GM23248 (cell line): ENCODE measurements at regions of chr7 and their contacts with region 1.

Region 1: GRCh38 chr7:45872116-45873034 is 507 bp downstream of the CCDC201 start:
- DNase-seq: peak; percentile 35
- H3K4me3 ChIP-seq: no peak overlapping the region
- H3K27ac ChIP-seq: no peak overlapping the region
- H3K4me1 ChIP-seq: peaks cover 12% of the 10 kb centered on the region
- H3K27me3 ChIP-seq: no peaks in the 10 kb centered on the region

Region 2: DNA sequence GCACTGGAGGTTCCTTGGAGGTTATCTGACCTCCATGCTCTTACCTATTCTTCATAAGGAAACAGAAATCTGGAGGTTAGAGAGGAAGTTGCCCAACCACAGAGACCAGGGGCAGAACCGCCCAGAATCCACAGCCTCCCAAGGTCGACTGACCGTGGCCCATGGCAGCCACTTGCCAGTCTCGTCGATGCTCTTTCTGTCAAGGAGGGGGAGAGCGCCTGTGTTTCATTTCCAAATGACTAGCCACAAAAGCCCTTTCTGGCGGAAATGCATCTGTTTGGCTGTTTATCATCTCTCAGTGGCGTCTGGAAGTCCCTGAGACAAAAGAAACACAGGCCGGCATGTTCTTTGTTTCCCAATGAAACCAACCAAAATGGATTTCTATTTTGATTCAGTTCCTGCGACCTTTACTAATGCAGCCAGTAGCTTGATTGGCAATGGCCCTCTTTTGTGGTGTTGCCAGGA is 711.9 kb before region 1 on chr7:
- in situ Hi-C with region 1: loop called (anchors 25 kb)
- DNase-seq: no peak
- H3K4me3 ChIP-seq: no peak overlapping the region
- H3K27ac ChIP-seq: no peak overlapping the region
- H3K4me1 ChIP-seq: no peaks in the 10 kb centered on the region
- H3K27me3 ChIP-seq: peaks cover 26% of the 10 kb centered on the region

Region 3: DNA sequence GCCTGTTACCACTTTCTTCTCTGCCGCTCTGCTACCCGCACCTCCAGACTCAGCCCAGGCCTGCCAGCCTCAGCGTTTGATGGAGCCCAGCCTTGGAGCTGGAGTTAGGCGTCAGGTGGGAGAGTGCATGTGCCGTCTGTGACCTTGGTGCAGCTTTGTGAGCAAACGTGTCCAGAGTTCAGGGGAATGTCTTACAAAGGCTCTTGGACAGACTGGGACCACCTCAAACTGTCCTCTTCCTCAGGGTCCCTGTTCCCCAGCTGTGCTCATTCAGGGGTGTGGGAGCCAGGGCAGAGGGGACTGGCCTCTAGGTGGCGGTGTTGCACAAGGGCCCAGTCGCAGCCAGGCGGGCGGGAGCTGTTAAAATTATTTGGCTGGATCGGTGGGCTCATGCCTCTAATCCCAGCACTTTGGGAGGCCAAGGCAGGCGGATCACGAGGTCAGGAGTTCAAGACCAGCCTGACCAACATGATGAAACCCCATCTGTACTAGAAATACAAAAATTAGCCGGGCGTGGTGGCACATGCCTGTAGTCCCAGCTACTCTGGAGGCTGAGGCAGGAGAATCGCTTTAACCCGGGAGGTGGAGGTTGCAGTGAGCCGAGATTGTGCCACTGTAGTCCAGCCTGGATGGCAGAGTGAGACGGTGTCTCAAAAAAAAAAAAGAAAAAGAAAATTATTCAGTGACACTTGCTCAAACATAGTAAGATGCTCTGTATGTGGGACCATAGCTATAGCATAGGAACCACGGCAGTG is 209.0 kb before region 1 on chr7:
- in situ Hi-C with region 1: loop called (anchors 25 kb)
- DNase-seq: peak; percentile 46
- H3K4me3 ChIP-seq: no peak overlapping the region
- H3K27ac ChIP-seq: no peak overlapping the region
- H3K4me1 ChIP-seq: no peaks in the 10 kb centered on the region
- H3K27me3 ChIP-seq: no peaks in the 10 kb centered on the region